ENCODE measurements at regions of chr12 and their contacts with region 1.

Region 1: GRCh38 chr12:109858764-109859163 is 21.6 kb downstream of the GLTP start:
- DNase-seq: no peak
- ATAC-seq: no peak
- H3K4me3 ChIP-seq: no peak overlapping the region
- H3K27ac ChIP-seq: no peak overlapping the region
- H3K4me1 ChIP-seq: no peaks in the 10 kb centered on the region
- H3K27me3 ChIP-seq: no peaks in the 10 kb centered on the region
- CTCF ChIP-seq: no peak

Region 2: GRCh38 chr12:109927622-109928021 is 68.9 kb after region 1 on chr12:
- CTCF ChIA-PET with region 1: interaction called, 3 read pairs
- POLR2A ChIA-PET with region 1: no interaction called
- in situ Hi-C with region 1: no loop called
- intact Hi-C with region 1: loop called (anchors 10 kb)
- DNase-seq: peak; percentile 17
- ATAC-seq: peak; percentile 82
- H3K4me3 ChIP-seq: no peak overlapping the region
- H3K27ac ChIP-seq: no peak overlapping the region
- H3K4me1 ChIP-seq: no peaks in the 10 kb centered on the region
- H3K27me3 ChIP-seq: no peaks in the 10 kb centered on the region
- CTCF ChIP-seq: peak; percentile 88

Measured in Panc1 (cell line).